Tibial artery (tissue), 4 donors: ENCODE measurements at regions of chr17 and their contacts with region 1.

Region 1: DNA sequence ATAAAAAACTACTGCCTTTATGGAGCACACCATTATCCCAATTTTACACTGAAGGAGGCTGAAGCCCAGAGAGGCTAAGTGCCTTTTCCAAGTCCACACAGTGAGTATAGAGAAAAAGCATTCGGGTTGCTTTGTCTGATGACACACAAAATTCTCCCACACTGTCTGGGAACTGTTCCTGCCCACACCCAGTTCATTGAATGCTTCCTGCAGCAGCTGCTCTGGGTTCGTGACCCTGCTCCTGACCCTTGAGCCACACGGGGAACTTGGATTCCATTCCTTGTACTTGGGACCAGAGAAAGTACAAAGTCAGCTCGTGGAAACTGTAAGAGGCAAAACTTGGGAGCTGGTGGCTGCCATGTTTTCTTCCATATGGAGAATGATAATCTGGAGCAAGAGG is 57.9 kb downstream of the AKAP1 start:
- DNase-seq: no peak
- H3K4me3 ChIP-seq: no peak overlapping the region
- H3K27ac ChIP-seq: no peak overlapping the region
- H3K4me1 ChIP-seq: no peaks in the 10 kb centered on the region
- H3K27me3 ChIP-seq: peaks cover 0 to 9% of the 10 kb centered on the region in 2 donors
- CTCF ChIP-seq: no peak

Region 2: GRCh38 chr17:57747221-57748017 is 604.5 kb after region 1 on chr17:
- intact Hi-C with region 1: loop called (anchors 5 kb)
- DNase-seq: no peak
- H3K4me3 ChIP-seq: no peak overlapping the region
- H3K27ac ChIP-seq: no peak overlapping the region
- H3K4me1 ChIP-seq: no peaks in the 10 kb centered on the region
- H3K27me3 ChIP-seq: peaks cover 0 to 38% of the 10 kb centered on the region in 2 donors
- CTCF ChIP-seq: peak; percentile 60 to 68